ENCODE measurements at regions of chr15 and their contacts with region 1.

Region 1: GRCh38 chr15:40906091-40906990 is 12.1 kb downstream of the VPS18 start:
- DNase-seq: peak; percentile 82 to 93 (median 91)
- H3K4me3 ChIP-seq: peak overlapping the region; percentile 30 to 87 (median 73)
- H3K27ac ChIP-seq: peak overlapping the region; percentile 7 to 73
- H3K4me1 ChIP-seq: peaks cover 6 to 65% (median 49%) of the 10 kb centered on the region in 4 experiments
- H3K27me3 ChIP-seq: no peaks in the 10 kb centered on the region

Region 2: GRCh38 chr15:40893733-40894688 is 12.3 kb before region 1 on chr15 and contains the start of gene VPS18:
- CTCF ChIA-PET with region 1: interaction called, 43 read pairs
- POLR2A ChIA-PET with region 1: no interaction called
- DNase-seq: peak; percentile 97 to 98 (median 98)
- H3K4me3 ChIP-seq: peak within 1 kb of the TSS; percentile 82 to 98 (median 89)
- H3K27ac ChIP-seq: peak within 1 kb of the TSS; percentile 75 to 85
- H3K4me1 ChIP-seq: peaks cover 7 to 31% (median 25%) of the 10 kb centered on the region in 4 experiments
- H3K27me3 ChIP-seq: peaks cover 0 to 2% (median 0%) of the 10 kb centered on the region in 5 experiments

Region 3: GRCh38 chr15:40923551-40923950 is 17.2 kb after region 1 on chr15:
- CTCF ChIA-PET with region 1: interaction called, 71 read pairs
- POLR2A ChIA-PET with region 1: interaction called, 4 read pairs
- DNase-seq: no peak
- H3K4me3 ChIP-seq: no peak overlapping the region
- H3K27ac ChIP-seq: no peak overlapping the region
- H3K4me1 ChIP-seq: peaks cover 4 to 34% (median 31%) of the 10 kb centered on the region in 4 experiments
- H3K27me3 ChIP-seq: peaks cover 3 to 51% (median 23%) of the 10 kb centered on the region in 5 experiments

Region 4: DNA sequence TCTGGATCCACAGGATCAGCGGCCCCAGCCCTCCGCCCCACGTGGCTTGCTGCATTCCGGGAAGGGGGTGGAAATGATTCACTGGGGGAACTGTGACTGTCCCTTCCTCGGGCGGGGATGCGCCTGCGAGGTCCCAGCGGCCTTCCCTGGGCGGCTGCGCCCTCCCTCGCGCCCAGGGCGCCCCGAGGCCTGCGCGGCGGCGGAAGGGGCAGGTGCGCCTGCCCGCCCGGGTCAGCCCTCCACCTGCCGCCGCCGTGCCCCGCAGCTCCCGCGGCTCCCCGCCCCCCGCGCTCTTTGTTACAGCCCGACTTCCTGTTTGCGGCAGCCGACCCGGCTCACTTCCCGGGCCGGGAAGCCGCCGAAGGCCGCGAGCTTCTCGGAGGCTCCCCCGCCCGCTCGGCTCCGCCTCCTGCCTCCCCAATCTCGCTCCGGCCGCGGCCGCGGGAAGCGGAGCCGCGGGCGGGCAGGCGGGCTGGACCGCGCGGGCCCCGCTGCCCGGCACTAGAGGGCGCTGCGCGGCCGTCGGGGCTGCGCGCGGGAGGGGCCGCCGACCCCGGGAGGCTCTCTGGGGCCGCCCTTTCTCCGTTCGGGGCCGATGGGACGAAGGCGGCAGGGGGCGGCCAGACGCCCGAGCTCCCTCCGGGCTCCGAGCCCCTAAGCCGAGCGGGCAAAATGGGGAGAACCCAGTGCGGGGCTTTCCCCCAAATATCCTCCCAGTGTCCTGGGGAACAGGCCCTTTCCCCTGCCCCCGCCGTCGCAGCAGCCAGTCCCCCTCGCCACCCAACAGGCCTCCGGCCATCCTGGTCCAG is 35.4 kb after region 1 on chr15:
- CTCF ChIA-PET with region 1: interaction called, 44 read pairs
- POLR2A ChIA-PET with region 1: no interaction called
- DNase-seq: peak; percentile 67 to 79 (median 74)
- H3K4me3 ChIP-seq: peak overlapping the region; percentile 30 to 87 (median 65)
- H3K27ac ChIP-seq: peak overlapping the region in 1 of 2 experiments; percentile 19
- H3K4me1 ChIP-seq: peaks cover 13 to 44% (median 38%) of the 10 kb centered on the region in 4 experiments
- H3K27me3 ChIP-seq: no peaks in the 10 kb centered on the region

Region 5: GRCh38 chr15:41011055-41011815 is 104.9 kb after region 1 on chr15:
- CTCF ChIA-PET with region 1: interaction called, 491 read pairs
- POLR2A ChIA-PET with region 1: no interaction called
- DNase-seq: peak in 2 of 3 donors; percentile 36 to 42
- H3K4me3 ChIP-seq: no peak overlapping the region
- H3K27ac ChIP-seq: no peak overlapping the region
- H3K4me1 ChIP-seq: peaks cover 3 to 14% (median 7%) of the 10 kb centered on the region in 4 experiments
- H3K27me3 ChIP-seq: no peaks in the 10 kb centered on the region

Measured in common myeloid progenitor, CD34-positive (primary cell).